Caco-2 (cell line): ENCODE measurements at regions of chr11 and their contacts with region 1.

Region 1: DNA sequence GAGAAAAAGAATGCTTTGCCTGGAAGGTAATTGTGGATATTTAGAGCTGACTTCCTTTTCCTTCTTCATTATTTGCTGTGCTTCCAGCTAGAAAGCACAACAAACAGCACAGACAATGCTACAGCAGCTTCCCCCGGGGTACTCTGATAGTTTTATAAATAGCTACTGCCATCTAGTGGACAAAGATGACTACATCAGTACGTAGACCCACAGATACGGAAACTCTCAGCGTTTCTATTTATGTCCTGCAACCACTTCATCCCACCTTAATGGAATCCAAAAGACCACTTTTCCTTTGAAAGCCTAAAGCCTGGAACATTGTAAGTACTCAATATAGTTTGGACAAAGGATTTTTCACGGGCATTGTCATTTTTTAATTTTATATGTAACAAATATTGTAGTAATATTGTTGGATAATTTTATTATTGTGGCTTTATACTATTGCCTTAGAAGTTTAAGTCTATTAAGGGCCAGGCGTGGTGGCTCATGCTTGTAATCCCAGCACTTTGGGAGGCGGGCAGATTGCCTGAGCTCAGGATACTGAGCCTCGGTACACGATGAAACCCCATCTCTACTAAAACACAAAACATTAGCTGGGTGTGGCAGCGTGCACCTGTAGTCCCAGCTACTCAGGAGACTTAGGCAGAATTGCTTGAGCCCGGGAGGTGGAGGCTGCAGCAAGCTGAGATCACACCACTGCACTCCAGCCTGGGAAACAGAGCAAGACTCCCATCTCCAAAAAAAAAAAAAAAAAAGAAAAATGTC is 7.5 kb downstream of the HSPA8 start:
- DNase-seq: peak; percentile 63 to 75
- H3K4me3 ChIP-seq: no peak overlapping the region
- H3K4me3 Mint-ChIP-seq: no peak overlapping the region
- H3K27ac Mint-ChIP-seq: peak overlapping the region; percentile 41
- H3K4me1 ChIP-seq: peaks cover 13% of the 10 kb centered on the region
- H3K4me1 Mint-ChIP-seq: peaks cover 17% of the 10 kb centered on the region
- H3K27me3 ChIP-seq: no peaks in the 10 kb centered on the region
- H3K27me3 Mint-ChIP-seq: no peaks in the 10 kb centered on the region
- CTCF ChIP-seq: peak; percentile 82 to 89

Region 2: GRCh38 chr11:122796128-122796717 is 258.3 kb before region 1 on chr11:
- CTCF ChIA-PET with region 1: interaction called, 11 read pairs
- POLR2A ChIA-PET with region 1: no interaction called
- intact Hi-C with region 1: no loop called
- DNase-seq: peak; percentile 58 to 72
- H3K4me3 ChIP-seq: no peak overlapping the region
- H3K4me3 Mint-ChIP-seq: no peak overlapping the region
- H3K27ac Mint-ChIP-seq: no peak overlapping the region
- H3K4me1 ChIP-seq: no peaks in the 10 kb centered on the region
- H3K4me1 Mint-ChIP-seq: peaks cover 5% of the 10 kb centered on the region
- H3K27me3 ChIP-seq: no peaks in the 10 kb centered on the region
- H3K27me3 Mint-ChIP-seq: no peaks in the 10 kb centered on the region
- CTCF ChIP-seq: peak; percentile 87 to 96

Region 3: DNA sequence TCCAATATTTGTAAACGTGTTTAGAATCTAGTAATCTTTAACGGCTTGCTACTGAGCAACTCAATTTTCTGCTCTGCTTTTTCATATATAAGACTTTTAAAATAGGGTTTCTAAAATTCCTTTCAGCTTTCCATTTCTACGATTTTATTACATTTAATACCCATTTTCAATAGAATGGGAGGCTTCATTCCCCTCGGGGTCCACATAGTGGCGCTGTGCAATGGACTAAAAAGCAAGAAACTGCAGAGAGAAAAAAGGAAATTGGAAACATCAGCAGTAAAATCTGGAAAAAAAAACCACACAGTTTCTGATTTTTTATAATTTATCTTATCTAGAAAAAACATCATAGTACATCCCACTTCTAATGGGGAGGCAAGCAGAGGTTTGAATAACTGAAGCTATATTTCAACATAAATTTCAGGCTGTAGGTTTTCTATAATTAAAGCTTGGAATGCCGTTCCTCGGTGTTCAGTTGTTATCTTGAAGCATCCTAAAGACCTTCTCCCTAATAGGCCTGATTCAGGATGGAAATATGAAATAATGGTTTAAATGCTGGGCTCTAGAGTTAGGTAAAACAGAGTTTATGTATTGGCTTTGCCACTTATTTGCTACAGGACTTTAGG is 190.7 kb before region 1 on chr11:
- CTCF ChIA-PET with region 1: interaction called, 7 read pairs
- POLR2A ChIA-PET with region 1: interaction called, 3 read pairs
- intact Hi-C with region 1: loop called (anchors 1 kb)
- DNase-seq: peak; percentile 28 to 65
- H3K4me3 ChIP-seq: no peak overlapping the region
- H3K4me3 Mint-ChIP-seq: no peak overlapping the region
- H3K27ac Mint-ChIP-seq: no peak overlapping the region
- H3K4me1 ChIP-seq: peaks cover 8% of the 10 kb centered on the region; the same call in 1 of the 2 replicates
- H3K4me1 Mint-ChIP-seq: no peaks in the 10 kb centered on the region
- H3K27me3 ChIP-seq: no peaks in the 10 kb centered on the region
- H3K27me3 Mint-ChIP-seq: peaks cover 43% of the 10 kb centered on the region
- CTCF ChIP-seq: peak; percentile 89 to 97

Region 4: DNA sequence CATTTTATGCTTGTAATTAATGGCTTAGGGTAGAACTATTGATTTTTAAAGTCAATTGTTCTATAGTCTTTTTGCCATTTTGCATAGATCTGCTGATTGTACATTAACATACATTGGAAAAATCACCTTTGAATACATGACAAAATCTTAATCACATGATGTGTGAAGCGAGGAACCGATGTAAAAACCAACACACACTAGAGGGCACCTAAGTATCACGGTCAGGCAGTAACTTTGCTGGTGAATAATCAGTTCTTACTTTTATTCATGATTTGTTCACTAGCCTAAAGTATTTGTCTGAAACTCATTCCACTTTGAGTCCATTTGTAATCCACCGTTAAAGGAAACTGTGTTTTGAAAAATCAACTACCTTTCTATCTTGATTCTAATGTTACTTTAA is 143.7 kb before region 1 on chr11:
- CTCF ChIA-PET with region 1: no interaction called
- POLR2A ChIA-PET with region 1: no interaction called
- intact Hi-C with region 1: loop called (anchors 1 kb)
- DNase-seq: peak in 1 of 2 experiments; percentile 51
- H3K4me3 ChIP-seq: no peak overlapping the region
- H3K4me3 Mint-ChIP-seq: no peak overlapping the region
- H3K27ac Mint-ChIP-seq: no peak overlapping the region
- H3K4me1 ChIP-seq: no peaks in the 10 kb centered on the region
- H3K4me1 Mint-ChIP-seq: no peaks in the 10 kb centered on the region
- H3K27me3 ChIP-seq: peaks cover 1% of the 10 kb centered on the region; the same call in 1 of the 2 replicates
- H3K27me3 Mint-ChIP-seq: peaks cover 16% of the 10 kb centered on the region
- CTCF ChIP-seq: peak; percentile 35 to 51

Region 5: DNA sequence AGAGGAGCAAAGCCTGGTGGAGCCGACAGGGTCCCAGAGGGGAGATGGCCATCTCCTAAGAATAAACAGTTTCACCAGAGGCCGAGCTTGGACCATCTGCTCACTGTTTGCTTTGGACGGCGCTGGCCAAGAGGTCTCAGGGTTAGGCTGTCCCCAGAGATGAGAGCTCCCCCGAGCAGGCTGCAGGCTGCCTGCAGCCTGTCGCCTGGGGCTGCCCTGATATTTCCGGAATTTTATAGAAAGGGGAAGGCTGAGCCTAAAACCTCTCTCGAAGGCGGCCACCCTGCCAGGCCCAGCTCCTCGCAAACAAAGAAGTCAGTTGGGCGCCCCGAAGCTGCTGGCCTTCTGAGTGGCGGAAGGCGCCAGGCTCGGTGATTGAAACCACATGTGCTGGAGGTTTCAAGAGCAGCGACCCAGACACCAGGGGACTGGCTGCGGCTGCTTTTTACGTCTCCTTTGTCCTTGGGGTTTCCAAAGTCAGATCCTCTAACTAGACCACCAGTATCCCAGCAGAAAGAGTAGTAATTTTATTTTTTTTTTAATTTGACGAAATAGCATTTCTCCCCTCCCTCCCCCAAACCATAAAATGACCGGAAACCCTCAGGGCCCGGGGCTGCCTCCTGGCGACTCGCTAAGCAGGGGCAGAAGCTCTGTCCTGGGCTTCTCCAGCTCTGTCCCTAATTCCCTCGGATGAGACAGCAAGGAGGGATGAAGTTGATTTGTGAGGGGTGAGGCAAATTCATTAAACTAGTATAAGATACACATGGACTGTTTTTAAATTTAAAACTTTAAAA is 83.1 kb after region 1 on chr11:
- CTCF ChIA-PET with region 1: no interaction called
- POLR2A ChIA-PET with region 1: no interaction called
- intact Hi-C with region 1: no loop called
- DNase-seq: no peak
- H3K4me3 ChIP-seq: no peak overlapping the region
- H3K4me3 Mint-ChIP-seq: no peak overlapping the region
- H3K27ac Mint-ChIP-seq: no peak overlapping the region
- H3K4me1 ChIP-seq: no peaks in the 10 kb centered on the region
- H3K4me1 Mint-ChIP-seq: no peaks in the 10 kb centered on the region
- H3K27me3 ChIP-seq: no peaks in the 10 kb centered on the region
- H3K27me3 Mint-ChIP-seq: no peaks in the 10 kb centered on the region
- CTCF ChIP-seq: no peak

Region 6: GRCh38 chr11:123268118-123268517 is 213.6 kb after region 1 on chr11:
- CTCF ChIA-PET with region 1: no interaction called
- POLR2A ChIA-PET with region 1: no interaction called
- intact Hi-C with region 1: no loop called
- DNase-seq: no peak
- H3K4me3 ChIP-seq: no peak overlapping the region
- H3K4me3 Mint-ChIP-seq: no peak overlapping the region
- H3K27ac Mint-ChIP-seq: no peak overlapping the region
- H3K4me1 ChIP-seq: no peaks in the 10 kb centered on the region
- H3K4me1 Mint-ChIP-seq: no peaks in the 10 kb centered on the region
- H3K27me3 ChIP-seq: peaks cover 1% of the 10 kb centered on the region; the same call in 1 of the 2 replicates
- H3K27me3 Mint-ChIP-seq: peaks cover 21% of the 10 kb centered on the region
- CTCF ChIP-seq: no peak